WTC11 (cell line): ENCODE measurements at regions of chr3 and their contacts with region 1.

Region 1: GRCh38 chr3:108552267-108553159 is 36.7 kb downstream of the CIP2A start:
- DNase-seq: no peak
- ATAC-seq: peak; percentile 39
- H3K4me3 Mint-ChIP-seq: no peak overlapping the region
- H3K27ac Mint-ChIP-seq: no peak overlapping the region; the same call in 1 of the 2 replicates
- H3K4me1 Mint-ChIP-seq: no peaks in the 10 kb centered on the region
- H3K27me3 Mint-ChIP-seq: no peaks in the 10 kb centered on the region
- CTCF ChIP-seq: peak; percentile 19; the same call in 1 of the 2 replicates

Region 2: DNA sequence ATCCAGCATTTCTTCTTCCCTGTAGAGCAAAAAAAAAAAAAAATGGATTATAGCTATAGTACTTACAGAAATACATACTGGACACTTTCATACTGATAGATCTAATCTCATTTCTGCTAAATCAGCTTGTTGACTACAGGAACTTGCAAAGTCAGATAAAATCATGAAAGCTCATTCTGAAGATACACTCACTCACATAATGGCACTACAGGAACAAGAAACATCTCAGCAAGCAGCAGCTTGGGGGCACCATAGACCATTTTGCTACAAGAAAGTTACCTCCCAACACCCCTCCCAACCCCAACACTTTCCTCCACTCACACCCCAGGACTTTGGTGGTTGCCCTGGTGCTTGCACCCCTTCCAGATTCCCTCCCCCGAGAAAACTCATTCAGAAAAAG is 46.7 kb before region 1 on chr3:
- CTCF ChIA-PET with region 1: interaction called, 17 read pairs
- POLR2A ChIA-PET with region 1: no interaction called
- DNase-seq: no peak
- ATAC-seq: peak; percentile 60
- H3K4me3 Mint-ChIP-seq: no peak overlapping the region
- H3K27ac Mint-ChIP-seq: no peak overlapping the region
- H3K4me1 Mint-ChIP-seq: peaks cover 7% of the 10 kb centered on the region
- H3K27me3 Mint-ChIP-seq: no peaks in the 10 kb centered on the region
- CTCF ChIP-seq: no peak